ENCODE measurements at regions of chr6 and their contacts with region 1.

Region 1: DNA sequence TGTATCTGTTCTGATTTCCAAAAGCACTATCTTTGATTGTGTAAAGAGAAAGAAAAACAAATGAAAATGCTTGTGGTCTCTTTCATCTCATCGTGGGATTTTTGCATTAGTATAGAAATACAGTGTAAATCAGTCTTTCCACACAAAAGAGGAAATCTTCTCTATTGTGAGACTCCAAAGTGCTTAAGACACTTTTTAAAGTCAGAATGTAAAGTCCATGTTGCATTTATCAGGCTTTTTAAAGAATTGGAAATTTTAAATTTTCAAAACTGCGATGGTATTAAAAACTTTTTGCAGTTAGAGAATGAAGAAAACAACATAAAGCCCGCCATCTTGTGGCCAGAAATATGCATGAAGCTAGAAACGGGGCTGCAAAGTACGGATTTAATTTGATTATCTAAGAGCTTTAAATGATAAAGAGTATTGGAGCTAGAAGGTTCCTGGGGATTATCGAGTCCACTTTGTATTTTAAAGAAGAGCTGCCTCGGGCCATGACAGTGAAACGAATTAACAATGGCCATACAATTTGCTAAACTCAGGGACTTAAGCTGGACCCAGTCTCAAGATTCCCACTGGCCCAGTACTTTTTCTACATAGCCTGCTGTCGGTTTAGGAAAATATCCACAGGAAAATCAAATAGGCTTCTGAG is 339.6 kb downstream of the ARHGAP18 start:
- DNase-seq: peak; percentile 32
- ATAC-seq: peak; percentile 58; the same call in 2 of the 3 replicates
- H3K4me3 ChIP-seq: no peak overlapping the region
- H3K27ac ChIP-seq: no peak overlapping the region
- H3K4me1 ChIP-seq: no peaks in the 10 kb centered on the region
- H3K27me3 ChIP-seq: no peaks in the 10 kb centered on the region
- CTCF ChIP-seq: peak; percentile 63
- EP300 ChIP-seq: no peak
- POLR2A ChIP-seq: no peak
- RAD21 ChIP-seq: no peak

Region 2: GRCh38 chr6:128719786-128720185 is 650.6 kb before region 1 on chr6:
- CTCF ChIA-PET with region 1: no interaction called
- POLR2A ChIA-PET with region 1: no interaction called
- in situ Hi-C with region 1: no loop called
- intact Hi-C with region 1: loop called (anchors 1 kb)
- DNase-seq: no peak
- ATAC-seq: no peak
- H3K4me3 ChIP-seq: no peak overlapping the region
- H3K27ac ChIP-seq: no peak overlapping the region
- H3K4me1 ChIP-seq: no peaks in the 10 kb centered on the region
- H3K27me3 ChIP-seq: no peaks in the 10 kb centered on the region
- CTCF ChIP-seq: no peak
- EP300 ChIP-seq: no peak
- POLR2A ChIP-seq: no peak
- RAD21 ChIP-seq: no peak

Region 3: GRCh38 chr6:128807577-128807976 is 562.8 kb before region 1 on chr6:
- CTCF ChIA-PET with region 1: interaction called, 3 read pairs
- POLR2A ChIA-PET with region 1: no interaction called
- in situ Hi-C with region 1: no loop called
- intact Hi-C with region 1: loop called (anchors 1 kb)
- DNase-seq: peak; percentile 16
- ATAC-seq: no peak
- H3K4me3 ChIP-seq: no peak overlapping the region
- H3K27ac ChIP-seq: no peak overlapping the region
- H3K4me1 ChIP-seq: no peaks in the 10 kb centered on the region
- H3K27me3 ChIP-seq: no peaks in the 10 kb centered on the region
- CTCF ChIP-seq: peak; percentile 28; the same call in 1 of the 2 replicates
- EP300 ChIP-seq: no peak
- POLR2A ChIP-seq: no peak
- RAD21 ChIP-seq: no peak

Measured in HepG2 (cell line).